Head of caudate nucleus (tissue), 42 donors: ENCODE measurements at regions of chr2 and their contacts with region 1.

Region 1: GRCh38 chr2:6909431-6910385 is 7.5 kb upstream of the RNF144A start:
- DNase-seq: no peak

Region 2: GRCh38 chr2:7026742-7027141 is 117.0 kb after region 1 on chr2:
- intact Hi-C with region 1: loop called (anchors 5 kb)
- DNase-seq: peak in 9 of 42 donors; percentile 4 to 28 (median 14)